T-cell (primary cell): ENCODE measurements at regions of chr12 and their contacts with region 1.

Region 1: GRCh38 chr12:46168426-46168825 is 100.4 kb downstream of the SLC38A1 start:
- DNase-seq: no peak
- ATAC-seq: no peak
- H3K4me3 ChIP-seq: no peak overlapping the region
- H3K4me3 Mint-ChIP-seq: no peak overlapping the region
- H3K27ac ChIP-seq: no peak overlapping the region
- H3K27ac Mint-ChIP-seq: no peak overlapping the region
- H3K4me1 ChIP-seq: no peaks in the 10 kb centered on the region
- H3K4me1 Mint-ChIP-seq: peaks cover 0 to 6% (median 0%) of the 10 kb centered on the region in 3 donors
- H3K27me3 ChIP-seq: no peaks in the 10 kb centered on the region
- H3K27me3 Mint-ChIP-seq: no peaks in the 10 kb centered on the region

Region 2: DNA sequence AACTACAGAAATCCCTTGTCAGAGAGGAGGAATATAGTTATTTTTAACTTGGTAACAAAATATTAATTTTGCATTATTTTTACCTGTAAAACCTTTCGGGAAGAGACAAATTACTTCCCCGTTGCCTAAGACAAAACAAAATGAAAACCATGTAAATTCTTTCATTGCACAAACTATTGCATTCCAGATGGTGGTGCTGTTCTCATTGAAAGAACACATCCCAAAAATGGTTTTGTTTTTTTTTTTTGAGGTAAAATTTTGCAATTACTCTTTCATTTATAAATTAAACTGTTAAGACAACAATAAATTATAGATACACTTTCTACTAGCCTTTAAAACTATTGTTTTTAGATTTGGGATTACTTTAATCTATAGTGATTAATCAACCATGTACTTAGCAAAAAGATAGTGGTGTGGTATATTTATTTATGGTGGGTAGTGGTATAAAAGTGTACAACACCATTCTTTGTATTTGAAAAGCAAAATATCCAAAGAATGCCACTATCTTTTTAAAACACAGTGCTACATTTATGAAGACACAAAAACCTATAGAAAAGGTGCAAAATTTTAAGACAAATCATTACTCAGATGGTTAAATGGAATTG is 15.1 kb before region 1 on chr12:
- CTCF ChIA-PET with region 1: interaction called in 1 of 2 experiments, 3 read pairs
- POLR2A ChIA-PET with region 1: interaction called, 8 to 17 read pairs
- DNase-seq: peak in 1 of 35 experiments; percentile 58
- ATAC-seq: no peak
- H3K4me3 ChIP-seq: no peak overlapping the region
- H3K4me3 Mint-ChIP-seq: no peak overlapping the region
- H3K27ac ChIP-seq: no peak overlapping the region
- H3K27ac Mint-ChIP-seq: no peak overlapping the region
- H3K4me1 ChIP-seq: peaks cover 0 to 4% of the 10 kb centered on the region in 2 experiments
- H3K4me1 Mint-ChIP-seq: peaks cover 13 to 16% (median 13%) of the 10 kb centered on the region in 3 donors
- H3K27me3 ChIP-seq: no peaks in the 10 kb centered on the region
- H3K27me3 Mint-ChIP-seq: peaks cover 1 to 3% of the 10 kb centered on the region in 2 donors